Head of caudate nucleus (tissue), 42 donors: ENCODE measurements at regions of chr2 and their contacts with region 1.

Region 1: DNA sequence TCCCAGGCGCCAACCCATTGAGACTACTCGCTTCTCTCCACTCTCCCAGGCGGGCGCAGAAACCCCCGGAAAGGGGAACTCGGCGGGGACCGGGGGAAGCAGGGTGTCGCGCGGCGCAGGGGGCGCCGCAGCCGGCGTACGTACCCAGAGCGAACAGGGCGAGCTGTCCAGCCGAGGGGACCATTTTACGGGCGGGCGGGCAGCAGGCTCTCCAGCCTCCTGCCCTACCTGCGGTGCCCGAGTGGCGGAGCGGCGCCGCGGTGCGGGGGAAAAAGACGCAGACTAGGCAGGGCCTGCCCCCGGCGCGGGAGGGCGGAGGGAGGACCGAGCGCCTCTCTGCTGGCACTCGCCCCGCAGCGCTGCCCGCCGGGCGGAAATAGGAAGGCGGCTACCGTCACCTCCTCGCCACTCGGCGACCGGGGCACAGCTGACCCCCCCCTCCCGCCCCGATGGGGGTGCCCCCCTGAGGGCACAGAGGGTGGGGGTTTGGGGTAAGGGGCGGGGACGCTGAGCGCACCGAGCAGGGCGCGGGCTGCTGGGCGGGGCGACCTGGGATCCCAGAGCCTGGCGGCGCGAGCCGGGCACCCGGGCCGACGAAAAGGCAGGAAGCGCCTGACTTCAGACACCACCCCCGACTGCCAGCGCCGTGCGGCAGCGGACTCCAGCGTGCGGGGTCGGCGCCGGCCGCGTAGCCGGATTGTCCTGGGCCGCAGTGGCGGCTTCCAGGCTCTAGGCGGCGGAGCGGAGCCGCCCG is at the start of gene TGFA:
- DNase-seq: peak; percentile 61 to 93 (median 85)

Region 2: DNA sequence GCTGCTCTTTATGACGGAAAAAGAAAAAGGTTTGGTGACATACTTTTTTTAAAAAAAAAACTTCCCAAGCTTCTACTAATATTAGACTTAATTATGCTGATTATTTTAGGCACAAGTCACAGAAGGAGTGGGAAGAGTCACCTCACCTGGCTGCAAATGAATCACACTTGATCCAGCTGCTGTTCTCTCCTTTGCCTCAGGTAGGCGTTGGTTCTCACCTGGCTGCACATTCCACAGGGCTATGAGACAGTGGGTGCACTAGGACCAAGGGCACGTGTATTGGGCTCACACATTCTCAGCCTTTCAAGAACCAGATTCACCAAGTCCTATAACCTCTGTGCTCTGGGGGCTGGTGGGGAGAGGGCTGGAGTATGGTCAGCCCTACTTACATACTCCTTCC is 93.4 kb before region 1 on chr2:
- intact Hi-C with region 1: loop called (anchors 5 kb)
- DNase-seq: peak in 27 of 42 donors; percentile 21 to 79 (median 43)

Region 3: DNA sequence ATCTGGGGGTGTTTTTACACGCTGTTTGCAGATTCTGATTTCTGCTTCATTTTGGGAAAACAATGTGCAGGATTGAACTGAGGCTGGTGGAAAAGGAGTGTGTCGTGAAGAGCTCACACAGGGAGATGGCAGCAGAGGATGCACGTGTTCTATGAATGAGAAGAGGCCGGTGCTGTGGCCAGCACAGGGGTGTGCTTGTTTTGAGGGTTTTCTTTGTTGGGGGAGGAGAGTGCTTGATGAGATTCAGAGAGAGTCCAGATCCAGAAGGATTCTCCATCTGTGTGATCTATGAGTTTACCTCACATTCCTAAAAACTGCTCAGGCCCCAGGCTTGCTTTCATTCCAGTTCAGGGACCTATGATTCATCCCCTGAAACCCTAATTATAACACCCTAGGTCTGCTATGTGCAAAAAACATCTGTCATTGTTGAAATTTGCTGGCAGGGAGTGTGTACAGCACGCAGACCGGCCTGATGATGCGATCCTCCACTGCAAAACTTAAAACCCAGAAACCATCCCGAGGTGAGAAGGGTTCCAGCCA is 12.2 kb before region 1 on chr2:
- intact Hi-C with region 1: no loop called
- DNase-seq: peak in 32 of 42 donors; percentile 23 to 78 (median 52)

Region 4: DNA sequence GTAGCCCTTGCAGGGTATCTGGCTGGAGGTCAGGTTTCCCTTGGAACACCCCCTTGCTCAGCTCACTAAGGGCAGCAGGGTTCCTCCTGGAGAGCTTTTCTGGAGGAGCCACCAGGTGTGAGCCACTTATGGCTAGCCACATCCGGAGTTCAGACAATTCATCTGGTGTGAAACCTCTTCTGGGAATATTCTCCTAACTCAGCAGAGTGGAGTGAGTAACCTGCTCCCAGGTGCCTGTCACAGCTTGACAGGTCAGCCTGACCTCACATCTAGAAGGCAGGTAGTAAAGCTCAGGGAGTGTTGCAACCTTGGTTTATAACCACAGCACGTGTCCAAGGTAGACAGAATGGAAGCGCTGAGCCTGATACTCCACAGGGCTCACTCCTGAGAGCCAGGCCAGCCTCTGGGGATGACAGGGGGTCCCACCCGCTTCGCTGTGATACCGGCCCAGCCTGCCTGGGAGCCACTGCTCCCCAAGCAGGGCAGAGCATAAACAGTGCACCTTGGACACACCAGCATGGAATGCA is 62.5 kb after region 1 on chr2:
- intact Hi-C with region 1: loop called (anchors 5 kb)
- DNase-seq: no peak